Naive thymus-derived CD8-positive, alpha-beta T cell (primary cell): ENCODE measurements at regions of chr11 and their contacts with region 1.

Region 1: GRCh38 chr11:64269380-64270234 is 14.9 kb downstream of the BAD start:
- DNase-seq: peak; percentile 93 to 98 (median 97)
- ATAC-seq: peak; percentile 76 to 77
- H3K4me3 Mint-ChIP-seq: peak overlapping the region; percentile 92 to 99 (median 96)
- H3K27ac Mint-ChIP-seq: peak overlapping the region; percentile 94 to 100 (median 98)
- H3K4me1 Mint-ChIP-seq: peaks cover 20 to 37% (median 27%) of the 10 kb centered on the region in 4 donors
- H3K27me3 Mint-ChIP-seq: no peaks in the 10 kb centered on the region

Region 2: DNA sequence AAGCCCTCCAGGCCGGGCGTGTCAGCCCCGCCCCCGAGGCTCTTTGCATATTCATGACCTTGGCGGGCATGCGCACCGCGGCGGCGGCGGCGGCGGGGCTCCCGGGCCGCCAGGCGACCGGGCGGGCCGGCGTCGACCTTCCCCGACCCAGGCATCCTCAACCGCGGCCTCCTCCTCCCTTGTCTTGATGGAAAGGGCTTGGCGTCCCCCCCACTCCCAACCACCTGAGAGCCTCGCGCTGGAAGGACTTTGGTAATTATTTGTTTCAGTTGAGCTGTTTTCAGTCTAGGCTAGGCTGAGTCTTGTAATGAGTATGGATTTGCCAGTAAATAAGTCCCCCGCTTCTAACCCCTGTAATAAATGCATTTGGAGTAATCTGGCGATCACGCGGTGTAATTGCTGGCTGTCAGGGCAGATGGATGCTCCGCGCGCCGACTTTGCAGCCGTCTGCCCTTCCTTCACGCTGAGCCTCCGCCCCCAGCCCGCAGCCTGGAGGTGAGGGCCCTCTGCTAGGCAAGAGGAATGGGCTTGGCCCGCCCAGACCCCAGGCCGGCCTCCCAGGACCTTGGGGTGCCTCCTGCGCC is 208.7 kb before region 1 on chr11:
- POLR2A ChIA-PET with region 1: no interaction called
- DNase-seq: peak; percentile 25 to 77 (median 49)
- ATAC-seq: peak; percentile 81 to 92
- H3K4me3 Mint-ChIP-seq: peak overlapping the region; percentile 75 to 89 (median 85)
- H3K27ac Mint-ChIP-seq: peak overlapping the region in 2 of 10 donors; percentile 30 to 64
- H3K4me1 Mint-ChIP-seq: peaks cover 3 to 9% (median 7%) of the 10 kb centered on the region in 4 donors
- H3K27me3 Mint-ChIP-seq: peaks cover 0 to 10% (median 5%) of the 10 kb centered on the region in 5 donors

Region 3: GRCh38 chr11:64185816-64186498 is 83.7 kb before region 1 on chr11 and contains the start of gene STIP1:
- POLR2A ChIA-PET with region 1: interaction called, 17 read pairs
- DNase-seq: peak; percentile 93 to 100 (median 99)
- ATAC-seq: peak; percentile 90 to 91
- H3K4me3 Mint-ChIP-seq: peak within 1 kb of the TSS in 8 of 10 donors; percentile 96 to 100 (median 98)
- H3K27ac Mint-ChIP-seq: peak within 1 kb of the TSS; percentile 91 to 99 (median 96)
- H3K4me1 Mint-ChIP-seq: peaks cover 23 to 55% (median 47%) of the 10 kb centered on the region in 4 donors
- H3K27me3 Mint-ChIP-seq: peaks cover 0 to 2% (median 0%) of the 10 kb centered on the region in 5 donors
- polyA plus RNA-seq, gene STIP1: 59.4 to 132 (median 66.2) TPM

Region 4: DNA sequence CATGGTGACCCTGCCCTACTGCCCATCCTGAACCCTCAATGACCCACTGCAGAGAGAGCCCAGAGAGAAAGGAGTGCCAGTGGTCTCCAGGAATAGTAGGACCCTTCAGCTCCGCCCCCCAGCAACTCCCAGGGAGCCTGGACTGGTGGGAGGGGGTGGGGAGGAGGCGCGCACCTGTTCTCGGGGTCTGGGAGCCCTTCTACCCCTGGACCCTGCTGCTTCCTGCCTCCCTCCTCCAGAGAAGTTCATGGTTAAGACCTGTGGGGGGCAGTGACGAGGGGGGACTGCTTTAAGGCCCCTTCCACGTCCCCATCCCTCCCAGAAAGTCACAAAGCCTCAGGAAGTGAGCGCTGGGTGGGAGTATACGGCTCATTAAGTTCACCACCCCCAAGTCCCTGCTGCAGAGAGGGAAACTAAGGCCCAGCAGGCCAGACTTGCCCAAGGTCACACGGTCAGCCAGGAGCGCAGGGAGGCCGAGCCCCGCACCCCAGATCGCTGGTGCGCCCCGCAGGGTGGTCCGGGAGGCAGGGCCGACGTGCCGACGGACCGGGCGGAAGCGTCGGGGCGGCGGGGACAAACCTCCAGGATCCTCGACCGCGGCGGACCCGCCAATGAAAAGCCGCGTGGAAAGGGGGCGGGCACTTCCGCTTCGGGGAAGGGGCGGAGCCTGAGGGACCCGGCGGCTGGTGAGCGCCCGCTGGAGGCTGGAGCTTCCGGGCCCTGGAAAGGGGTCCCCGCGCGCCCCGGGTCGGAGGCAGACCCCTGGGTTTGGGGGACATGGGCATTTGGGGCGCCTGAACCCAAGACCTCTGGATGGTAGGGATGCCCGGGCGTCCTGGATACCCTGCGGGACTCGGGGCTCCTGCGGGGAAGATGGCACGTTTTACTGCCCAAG is 43.7 kb before region 1 on chr11 and contains the starts of genes NUDT22 and TRPT1:
- POLR2A ChIA-PET with region 1: interaction called, 27 read pairs
- DNase-seq: peak; percentile 80 to 93 (median 85)
- ATAC-seq: peak; percentile 69 to 71
- H3K4me3 Mint-ChIP-seq: peak within 1 kb of the TSS; percentile 87 to 95 (median 90)
- H3K27ac Mint-ChIP-seq: peak within 1 kb of the TSS; percentile 83 to 97 (median 92)
- H3K4me1 Mint-ChIP-seq: peaks cover 17 to 41% (median 33%) of the 10 kb centered on the region in 4 donors
- H3K27me3 Mint-ChIP-seq: no peaks in the 10 kb centered on the region
- polyA plus RNA-seq, gene NUDT22: 43.4 to 50.4 (median 48.2) TPM
- polyA plus RNA-seq, gene TRPT1: 47.2 to 54.2 (median 51.4) TPM

Region 5: GRCh38 chr11:64246871-64247728 is 22.5 kb before region 1 on chr11 and contains the start of gene PPP1R14B:
- POLR2A ChIA-PET with region 1: interaction called, 113 read pairs
- DNase-seq: peak; percentile 57 to 87 (median 71)
- ATAC-seq: peak; percentile 65 to 69
- H3K4me3 Mint-ChIP-seq: peak within 1 kb of the TSS; percentile 79 to 92 (median 88)
- H3K27ac Mint-ChIP-seq: peak within 1 kb of the TSS; percentile 13 to 93 (median 82)
- H3K4me1 Mint-ChIP-seq: peaks cover 18 to 53% (median 48%) of the 10 kb centered on the region in 4 donors
- H3K27me3 Mint-ChIP-seq: no peaks in the 10 kb centered on the region
- polyA plus RNA-seq, gene PPP1R14B: 22.4 to 50.6 (median 45.4) TPM

Region 6: DNA sequence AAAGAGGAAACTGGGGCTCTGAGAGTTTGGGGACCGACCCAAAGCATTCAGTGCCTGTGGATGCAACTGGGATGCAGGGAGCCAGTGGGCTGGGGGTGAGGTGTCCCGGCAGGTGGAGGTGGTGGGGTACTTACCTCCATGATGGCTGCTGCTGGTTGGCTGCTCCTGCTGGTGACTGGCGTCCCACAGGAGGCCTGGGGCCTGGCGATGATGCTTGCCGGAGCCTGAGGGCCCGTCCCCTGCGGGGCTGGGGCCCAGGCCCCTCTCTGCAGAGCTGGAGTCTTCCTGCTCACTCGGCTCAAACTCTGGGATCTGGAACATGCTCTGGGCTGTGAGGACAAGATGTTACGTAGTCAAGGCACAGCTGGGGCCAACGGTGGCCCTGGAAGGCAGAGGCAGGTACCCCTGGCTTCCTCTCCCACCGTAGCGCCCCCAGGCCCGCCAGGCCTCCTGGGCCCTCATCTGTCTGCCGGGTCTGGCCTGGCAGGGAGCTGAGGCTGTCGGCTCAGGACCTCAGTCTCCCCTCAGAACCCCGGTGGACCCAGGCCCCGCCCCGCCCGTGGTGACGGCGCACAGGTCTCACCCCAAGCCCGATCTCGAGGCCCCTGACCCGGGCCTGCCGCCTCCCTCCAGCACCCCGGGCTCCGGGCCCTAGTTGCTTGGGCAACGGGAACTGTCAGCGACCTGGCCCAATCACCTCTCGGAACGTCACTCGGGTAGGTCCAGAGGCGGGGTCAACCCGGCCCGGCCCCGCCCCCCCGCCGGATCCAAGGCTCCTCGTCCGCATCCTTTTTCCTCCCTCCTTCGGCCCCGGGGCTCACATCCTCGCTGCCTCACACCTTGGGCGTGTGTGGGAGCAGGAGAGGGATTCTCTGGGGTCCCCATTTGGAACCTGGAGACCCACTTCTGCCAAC is 14.7 kb after region 1 on chr11 and contains the start of gene BAD:
- POLR2A ChIA-PET with region 1: interaction called, 140 read pairs
- DNase-seq: peak; percentile 86 to 96 (median 88)
- ATAC-seq: peak; percentile 78 to 79
- H3K4me3 Mint-ChIP-seq: peak within 1 kb of the TSS; percentile 85 to 94 (median 90)
- H3K27ac Mint-ChIP-seq: peak within 1 kb of the TSS; percentile 74 to 99 (median 97)
- H3K4me1 Mint-ChIP-seq: peaks cover 8 to 29% (median 21%) of the 10 kb centered on the region in 4 donors
- H3K27me3 Mint-ChIP-seq: no peaks in the 10 kb centered on the region
- polyA plus RNA-seq, gene BAD: 39.1 to 44.8 (median 39.9) TPM

Region 7: DNA sequence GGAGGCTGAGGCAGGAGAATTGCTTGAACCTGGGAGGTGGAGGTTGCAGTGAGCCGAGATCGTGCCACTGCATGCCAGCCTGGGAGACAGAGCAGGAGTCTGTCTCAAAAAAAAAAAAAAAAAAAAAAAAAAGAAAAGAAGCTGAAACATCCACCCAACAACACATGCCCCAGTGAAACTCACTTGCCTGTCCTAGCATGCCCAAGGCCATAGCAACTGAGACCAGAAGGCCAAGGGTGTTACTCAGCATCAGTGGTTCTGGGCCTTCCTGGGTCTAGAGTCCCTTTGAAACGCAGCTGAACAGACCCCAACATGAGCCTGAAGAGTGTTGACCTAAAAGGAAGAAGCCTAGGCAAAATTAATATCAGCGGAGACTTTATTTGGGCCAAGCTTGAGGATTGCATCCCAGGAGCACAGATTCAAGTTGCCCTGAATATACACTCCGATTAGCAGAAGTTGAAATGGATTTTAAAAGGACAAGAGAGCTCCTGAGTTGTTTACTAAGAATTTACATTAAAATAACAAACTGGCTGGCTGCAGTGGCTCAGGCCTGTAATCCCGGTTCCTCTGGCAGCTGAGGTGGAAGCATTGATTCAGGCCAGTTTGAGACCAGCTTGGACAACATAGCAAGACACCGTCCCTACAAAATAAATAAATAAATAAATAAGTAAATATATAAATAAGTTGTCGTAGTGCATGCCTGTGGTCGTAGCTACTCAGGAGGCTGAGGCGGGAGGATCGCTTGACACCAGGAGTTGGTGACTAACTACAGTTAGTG is 55.3 kb after region 1 on chr11:
- POLR2A ChIA-PET with region 1: no interaction called
- DNase-seq: no peak
- ATAC-seq: no peak
- H3K4me3 Mint-ChIP-seq: no peak overlapping the region
- H3K27ac Mint-ChIP-seq: no peak overlapping the region
- H3K4me1 Mint-ChIP-seq: peaks cover 8 to 13% (median 11%) of the 10 kb centered on the region in 4 donors
- H3K27me3 Mint-ChIP-seq: no peaks in the 10 kb centered on the region

Region 8: DNA sequence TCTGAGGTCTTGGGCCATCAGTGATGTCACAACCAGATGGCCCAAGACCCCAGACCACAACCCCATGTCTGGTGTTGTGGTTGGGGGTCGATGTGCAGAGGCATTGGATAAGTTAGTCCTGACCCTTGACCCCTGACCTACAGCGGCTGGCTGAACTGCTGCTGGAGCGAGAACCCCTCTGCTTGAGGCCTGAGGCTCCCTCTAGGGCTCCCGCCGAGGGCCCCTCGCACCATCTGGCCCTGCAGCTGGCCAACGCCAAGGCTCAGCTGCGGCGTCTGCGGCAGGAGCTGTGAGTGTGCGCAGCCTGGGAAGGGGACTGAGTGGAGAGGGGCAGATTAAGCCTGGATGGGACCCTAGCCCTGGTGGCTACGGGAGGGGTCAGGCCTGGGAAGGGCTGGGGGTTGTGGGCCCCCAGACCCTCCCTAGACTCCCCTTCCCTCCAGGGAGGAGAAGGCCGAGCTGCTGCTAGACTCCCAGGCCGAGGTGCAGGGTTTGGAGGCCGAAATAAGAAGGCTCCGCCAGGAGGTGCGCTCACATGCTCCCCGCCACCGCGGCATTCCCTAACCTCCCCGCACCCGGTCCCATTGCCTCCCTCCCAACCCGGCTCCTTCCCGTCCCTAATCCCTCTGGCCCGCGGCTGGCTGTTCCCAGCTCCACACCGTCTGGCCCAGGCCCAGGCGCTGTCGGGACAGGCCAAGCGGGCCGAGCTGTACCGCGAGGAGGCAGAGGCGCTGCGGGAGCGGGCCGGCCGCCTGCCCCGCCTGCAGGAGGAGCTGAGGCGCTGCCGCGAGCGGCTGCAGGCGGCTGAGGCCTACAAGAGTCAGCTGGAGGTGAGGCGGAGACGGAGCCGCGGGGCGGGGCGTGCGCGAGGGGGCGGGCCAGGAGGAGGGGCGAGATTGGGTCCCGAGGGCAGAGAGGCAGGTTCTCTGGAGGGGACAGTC is 72.5 kb after region 1 on chr11:
- POLR2A ChIA-PET with region 1: interaction called, 11 read pairs
- DNase-seq: peak; percentile 76 to 88 (median 85)
- ATAC-seq: peak; percentile 51 to 54
- H3K4me3 Mint-ChIP-seq: peak overlapping the region in 9 of 10 donors; percentile 32 to 92 (median 85)
- H3K27ac Mint-ChIP-seq: peak overlapping the region in 5 of 10 donors; percentile 29 to 75 (median 52)
- H3K4me1 Mint-ChIP-seq: peaks cover 23 to 60% (median 50%) of the 10 kb centered on the region in 4 donors
- H3K27me3 Mint-ChIP-seq: no peaks in the 10 kb centered on the region

Region 9: GRCh38 chr11:64355078-64355940 is 85.7 kb after region 1 on chr11:
- POLR2A ChIA-PET with region 1: no interaction called
- DNase-seq: peak in 9 of 10 donors; percentile 29 to 78 (median 46)
- ATAC-seq: peak; percentile 41 to 59
- H3K4me3 Mint-ChIP-seq: no peak overlapping the region
- H3K27ac Mint-ChIP-seq: peak overlapping the region in 1 of 10 donors; percentile 65
- H3K4me1 Mint-ChIP-seq: peaks cover 9 to 33% (median 26%) of the 10 kb centered on the region in 4 donors
- H3K27me3 Mint-ChIP-seq: no peaks in the 10 kb centered on the region

Region 10: GRCh38 chr11:64419818-64420485 is 150.3 kb after region 1 on chr11:
- POLR2A ChIA-PET with region 1: no interaction called
- DNase-seq: no peak
- ATAC-seq: no peak
- H3K4me3 Mint-ChIP-seq: no peak overlapping the region
- H3K27ac Mint-ChIP-seq: peak overlapping the region in 1 of 10 donors; percentile 46
- H3K4me1 Mint-ChIP-seq: peaks cover 4 to 5% (median 5%) of the 10 kb centered on the region in 4 donors
- H3K27me3 Mint-ChIP-seq: peaks cover 0 to 2% (median 0%) of the 10 kb centered on the region in 5 donors